Activated CD8-positive, alpha-beta T cell treated with anti-CD3 and anti-CD28 coated beads for 36 hours (primary cell): ENCODE measurements at regions of chr5 and their contacts with region 1.

Region 1: DNA sequence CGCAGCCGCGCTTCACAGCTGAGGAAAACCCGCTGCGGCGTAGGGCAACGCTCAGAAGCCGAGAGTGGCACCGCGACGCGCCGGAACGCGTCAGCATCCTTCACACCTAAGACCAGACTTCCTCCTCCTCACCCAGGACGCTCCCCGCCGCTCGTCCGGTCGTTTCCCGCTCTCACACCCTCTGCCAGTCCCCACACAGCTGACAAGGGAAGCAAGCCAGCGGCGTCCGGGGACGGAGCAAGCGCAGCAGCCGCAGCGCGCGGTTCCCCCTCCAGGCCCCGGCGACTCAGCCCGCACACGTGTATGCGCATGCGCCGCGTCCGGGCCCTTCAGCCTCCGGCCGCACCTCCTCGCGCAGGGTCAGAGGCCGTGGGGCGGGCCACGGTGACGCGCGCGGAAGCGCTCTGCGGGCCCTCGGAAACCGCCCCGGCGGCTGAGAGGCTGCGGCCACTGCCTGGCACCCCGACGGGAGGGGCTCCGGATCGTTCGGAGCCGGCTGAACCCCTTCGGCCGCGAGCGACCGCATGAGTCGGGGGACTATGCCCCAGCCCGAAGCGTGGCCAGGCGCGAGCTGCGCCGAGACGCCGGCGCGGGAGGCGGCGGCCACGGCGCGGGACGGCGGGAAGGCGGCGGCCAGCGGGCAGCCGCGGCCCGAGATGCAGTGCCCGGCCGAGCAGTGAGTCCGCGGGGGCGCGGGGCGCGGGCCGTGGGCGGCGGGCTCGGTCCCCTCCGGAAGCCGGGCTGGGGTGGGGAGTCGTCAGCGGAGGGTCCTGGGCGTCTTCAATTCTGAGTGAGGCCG is at the start of gene OTULIN:
- DNase-seq: peak; percentile 92
- ATAC-seq: peak; percentile 76
- H3K4me3 Mint-ChIP-seq: peak within 1 kb of the TSS; percentile 96
- H3K27ac Mint-ChIP-seq: peak within 1 kb of the TSS; percentile 94
- H3K4me1 Mint-ChIP-seq: peaks cover 61% of the 10 kb centered on the region
- H3K27me3 Mint-ChIP-seq: no peaks in the 10 kb centered on the region
- CTCF ChIP-seq: no peak
- total RNA-seq, gene OTULIN: 59.6 to 60.5 TPM

Region 2: GRCh38 chr5:14286574-14287421 is 377.7 kb before region 1 on chr5:
- CTCF ChIA-PET with region 1: no interaction called
- POLR2A ChIA-PET with region 1: no interaction called
- intact Hi-C with region 1: no loop called
- DNase-seq: no peak
- ATAC-seq: no peak
- H3K4me3 Mint-ChIP-seq: no peak overlapping the region
- H3K27ac Mint-ChIP-seq: no peak overlapping the region
- H3K4me1 Mint-ChIP-seq: no peaks in the 10 kb centered on the region
- H3K27me3 Mint-ChIP-seq: no peaks in the 10 kb centered on the region
- CTCF ChIP-seq: no peak

Region 3: DNA sequence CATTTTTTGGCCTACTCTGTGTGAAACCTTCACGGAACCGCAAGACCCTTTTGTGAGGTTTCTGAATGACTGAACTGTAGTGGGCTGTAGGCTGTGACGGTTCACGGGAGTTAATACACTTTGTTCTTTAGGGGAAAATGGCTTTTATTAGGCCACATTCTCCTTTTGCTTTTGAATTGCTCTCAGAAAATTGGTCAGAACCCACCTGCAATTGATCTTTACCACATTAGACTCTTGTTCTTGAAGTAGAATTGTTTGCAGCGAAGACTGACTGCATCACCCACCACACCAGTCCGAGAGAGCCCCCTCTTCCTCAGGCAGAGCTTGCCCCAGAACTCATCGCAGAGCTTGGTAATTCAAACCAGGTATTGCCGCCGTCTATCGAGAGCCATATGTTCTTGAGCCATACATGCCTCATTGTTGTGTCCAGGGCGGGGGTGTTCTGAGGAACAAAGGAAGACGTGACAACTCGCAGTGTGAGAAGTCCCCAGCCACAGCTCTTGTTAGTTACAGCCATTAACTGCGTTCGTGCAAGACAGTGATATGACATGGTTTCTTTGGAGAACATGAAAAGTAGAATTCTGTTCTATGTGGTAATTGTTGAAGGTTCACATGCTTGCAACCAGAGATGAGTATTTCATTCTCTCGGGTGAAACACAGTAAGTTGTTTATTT is 249.3 kb before region 1 on chr5:
- CTCF ChIA-PET with region 1: interaction called, 3 read pairs
- POLR2A ChIA-PET with region 1: interaction called, 3 read pairs
- intact Hi-C with region 1: loop called (anchors 5 kb)
- DNase-seq: peak; percentile 85
- ATAC-seq: peak; percentile 58
- H3K4me3 Mint-ChIP-seq: peak overlapping the region; percentile 67
- H3K27ac Mint-ChIP-seq: peak overlapping the region; percentile 98
- H3K4me1 Mint-ChIP-seq: peaks cover 57% of the 10 kb centered on the region
- H3K27me3 Mint-ChIP-seq: no peaks in the 10 kb centered on the region
- CTCF ChIP-seq: no peak

Region 4: DNA sequence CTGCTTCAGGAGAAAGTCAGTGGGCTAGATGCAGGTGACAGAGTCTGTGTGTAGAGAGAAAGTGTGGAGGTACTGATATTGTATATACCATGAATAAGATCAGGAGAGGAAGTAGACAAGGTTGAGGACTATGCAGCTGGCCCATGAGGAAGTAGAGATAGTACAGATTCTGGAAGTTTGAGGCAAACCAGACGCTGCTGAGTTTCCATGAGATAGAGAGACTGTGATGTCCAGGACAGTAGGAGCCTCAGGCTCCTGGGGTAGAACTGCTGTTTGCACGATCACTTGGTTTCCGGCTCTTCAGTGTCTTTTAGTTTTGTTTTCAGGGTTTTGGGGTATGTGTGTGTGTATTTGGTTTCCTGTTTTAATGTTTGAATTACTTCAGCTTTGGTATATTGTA is 69.3 kb before region 1 on chr5:
- CTCF ChIA-PET with region 1: no interaction called
- POLR2A ChIA-PET with region 1: no interaction called
- intact Hi-C with region 1: loop called (anchors 5 kb)
- DNase-seq: peak; percentile 70
- ATAC-seq: peak; percentile 76
- H3K4me3 Mint-ChIP-seq: peak overlapping the region; percentile 65
- H3K27ac Mint-ChIP-seq: peak overlapping the region; percentile 96
- H3K4me1 Mint-ChIP-seq: peaks cover 92% of the 10 kb centered on the region
- H3K27me3 Mint-ChIP-seq: no peaks in the 10 kb centered on the region
- CTCF ChIP-seq: no peak

Region 5: GRCh38 chr5:14650052-14650451 is 14.4 kb before region 1 on chr5:
- CTCF ChIA-PET with region 1: interaction called, 49 read pairs
- POLR2A ChIA-PET with region 1: interaction called, 5 read pairs
- intact Hi-C with region 1: no loop called
- DNase-seq: no peak
- ATAC-seq: no peak
- H3K4me3 Mint-ChIP-seq: no peak overlapping the region
- H3K27ac Mint-ChIP-seq: no peak overlapping the region
- H3K4me1 Mint-ChIP-seq: peaks cover 1% of the 10 kb centered on the region
- H3K27me3 Mint-ChIP-seq: peaks cover 15% of the 10 kb centered on the region
- CTCF ChIP-seq: no peak

Region 6: DNA sequence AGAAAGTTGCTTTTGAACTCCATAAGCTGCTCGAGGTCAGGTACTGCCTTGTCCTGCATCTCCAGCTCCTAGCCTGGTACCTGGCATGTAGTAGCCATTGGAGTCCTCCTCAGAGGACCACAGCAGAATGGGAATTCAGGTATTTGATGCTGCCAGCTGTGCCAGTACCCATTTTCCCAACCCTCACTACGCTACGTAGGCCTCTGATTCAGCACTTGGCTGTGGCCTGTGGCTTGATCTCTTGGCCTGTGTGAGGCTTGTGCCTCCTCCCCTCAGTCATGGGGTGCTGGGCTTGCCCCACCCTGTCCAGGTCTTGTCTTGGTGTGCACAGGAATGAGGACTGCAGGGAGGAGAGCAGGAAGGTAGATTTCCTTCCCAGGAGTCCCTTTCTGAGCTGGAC is 11.8 kb after region 1 on chr5:
- CTCF ChIA-PET with region 1: interaction called, 15 read pairs
- POLR2A ChIA-PET with region 1: interaction called, 6 read pairs
- intact Hi-C with region 1: no loop called
- DNase-seq: peak; percentile 57
- ATAC-seq: peak; percentile 76
- H3K4me3 Mint-ChIP-seq: peak overlapping the region; percentile 50
- H3K27ac Mint-ChIP-seq: peak overlapping the region; percentile 90
- H3K4me1 Mint-ChIP-seq: peaks cover 71% of the 10 kb centered on the region
- H3K27me3 Mint-ChIP-seq: no peaks in the 10 kb centered on the region
- CTCF ChIP-seq: no peak

Region 7: GRCh38 chr5:14706615-14707021 is 42.1 kb after region 1 on chr5:
- CTCF ChIA-PET with region 1: no interaction called
- POLR2A ChIA-PET with region 1: no interaction called
- intact Hi-C with region 1: loop called (anchors 5 kb)
- DNase-seq: peak; percentile 33
- ATAC-seq: peak; percentile 91
- H3K4me3 Mint-ChIP-seq: peak overlapping the region; percentile 46
- H3K27ac Mint-ChIP-seq: peak overlapping the region; percentile 97
- H3K4me1 Mint-ChIP-seq: peaks cover 68% of the 10 kb centered on the region
- H3K27me3 Mint-ChIP-seq: no peaks in the 10 kb centered on the region
- CTCF ChIP-seq: no peak

Region 8: DNA sequence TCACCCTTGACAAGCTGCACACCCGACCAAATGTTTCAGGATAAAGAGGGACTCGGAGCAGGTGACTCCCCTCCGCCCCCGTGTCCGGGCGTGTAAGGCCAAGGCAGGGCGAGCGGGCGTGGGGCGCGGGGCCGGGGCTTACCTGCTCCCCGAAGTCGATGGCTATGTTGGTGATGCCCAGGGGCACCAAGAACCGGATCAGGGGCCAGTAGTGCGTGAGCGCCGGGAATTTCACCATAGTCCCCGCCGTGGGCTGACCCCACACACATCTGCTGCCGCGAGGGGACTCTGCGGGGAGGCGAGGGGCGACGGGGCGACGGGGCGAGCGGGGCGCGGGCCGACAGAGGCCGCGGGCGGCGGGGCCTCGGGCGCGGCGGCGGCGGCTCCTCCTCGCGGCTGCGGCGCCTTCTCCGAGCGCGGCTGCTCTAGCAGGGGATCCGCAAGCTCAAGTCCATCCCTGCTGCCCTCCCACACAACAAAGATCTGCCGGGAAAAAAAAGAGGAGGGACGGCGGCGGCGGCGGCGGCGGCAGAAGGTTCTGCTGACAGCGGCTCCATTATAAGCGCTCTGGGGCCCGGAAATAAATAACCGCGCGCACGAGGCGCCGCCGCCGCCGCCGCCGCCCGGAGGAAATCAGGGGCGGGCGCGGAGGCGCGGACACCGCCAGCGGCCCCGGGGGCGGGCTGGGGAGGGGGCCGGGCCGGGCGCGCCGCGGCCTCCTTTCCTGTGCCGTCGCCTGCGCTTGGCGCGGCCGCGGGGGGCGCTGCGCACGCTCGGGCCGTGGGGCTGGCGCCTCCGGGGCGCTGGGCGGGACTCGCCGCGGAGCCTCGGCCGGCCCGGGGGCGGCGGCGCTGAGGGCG is 206.9 kb after region 1 on chr5 and contains the start of gene ANKH:
- CTCF ChIA-PET with region 1: no interaction called
- POLR2A ChIA-PET with region 1: no interaction called
- intact Hi-C with region 1: loop called (anchors 5 kb)
- DNase-seq: peak; percentile 81
- ATAC-seq: peak; percentile 84
- H3K4me3 Mint-ChIP-seq: peak within 1 kb of the TSS; percentile 90
- H3K27ac Mint-ChIP-seq: peak within 1 kb of the TSS; percentile 90
- H3K4me1 Mint-ChIP-seq: peaks cover 29% of the 10 kb centered on the region
- H3K27me3 Mint-ChIP-seq: no peaks in the 10 kb centered on the region
- CTCF ChIP-seq: no peak
- total RNA-seq, gene ANKH: 85.4 to 87.2 TPM